GM12878 (cell line): ENCODE measurements at regions of chr1 and their contacts with region 1.

Region 1: GRCh38 chr1:226062558-226063223 is at the start of gene H3-3A:
- DNase-seq: peak; percentile 66
- ATAC-seq: peak; percentile 88
- H3K4me3 ChIP-seq: peak within 1 kb of the TSS; percentile 91
- H3K27ac ChIP-seq: peak within 1 kb of the TSS; percentile 97
- H3K4me1 ChIP-seq: peaks cover 8% of the 10 kb centered on the region
- H3K27me3 ChIP-seq: no peaks in the 10 kb centered on the region
- CTCF ChIP-seq: no peak
- EP300 ChIP-seq: no peak
- POLR2A ChIP-seq: peak; percentile 91
- RAD21 ChIP-seq: no peak
- polyA plus RNA-seq, gene H3-3A: 254 to 435 TPM

Region 2: GRCh38 chr1:225962440-225962975 is 100.2 kb before region 1 on chr1:
- CTCF ChIA-PET with region 1: interaction called, 12 read pairs
- POLR2A ChIA-PET with region 1: no interaction called
- RAD21 ChIA-PET with region 1: interaction called, 3 read pairs
- SMC1A ChIA-PET with region 1: interaction called, 7 read pairs
- in situ Hi-C with region 1: no loop called
- intact Hi-C with region 1: no loop called
- DNase-seq: no peak
- ATAC-seq: peak; percentile 99
- H3K4me3 ChIP-seq: no peak overlapping the region
- H3K27ac ChIP-seq: no peak overlapping the region
- H3K4me1 ChIP-seq: no peaks in the 10 kb centered on the region
- H3K27me3 ChIP-seq: no peaks in the 10 kb centered on the region; a peak in 1 of 4 replicates
- CTCF ChIP-seq: peak; percentile 67 to 85 (median 75)
- EP300 ChIP-seq: no peak
- POLR2A ChIP-seq: no peak
- RAD21 ChIP-seq: peak; percentile 60

Region 3: GRCh38 chr1:225999227-225999911 is 63.3 kb before region 1 on chr1 and contains the start of gene SDE2:
- CTCF ChIA-PET with region 1: interaction called, 86 read pairs
- POLR2A ChIA-PET with region 1: interaction called, 74 read pairs
- RAD21 ChIA-PET with region 1: interaction called, 20 read pairs
- SMC1A ChIA-PET with region 1: interaction called, 35 read pairs
- in situ Hi-C with region 1: no loop called
- intact Hi-C with region 1: loop called (anchors 1 kb)
- DNase-seq: peak; percentile 95
- ATAC-seq: peak; percentile 83
- H3K4me3 ChIP-seq: peak within 1 kb of the TSS; percentile 96
- H3K27ac ChIP-seq: peak within 1 kb of the TSS; percentile 97
- H3K4me1 ChIP-seq: peaks cover 39% of the 10 kb centered on the region
- H3K27me3 ChIP-seq: no peaks in the 10 kb centered on the region
- CTCF ChIP-seq: no peak
- EP300 ChIP-seq: no peak; a peak in 1 of 4 replicates
- POLR2A ChIP-seq: peak; percentile 100
- RAD21 ChIP-seq: no peak
- polyA plus RNA-seq, gene SDE2: 2.7 to 4.3 TPM

Region 4: DNA sequence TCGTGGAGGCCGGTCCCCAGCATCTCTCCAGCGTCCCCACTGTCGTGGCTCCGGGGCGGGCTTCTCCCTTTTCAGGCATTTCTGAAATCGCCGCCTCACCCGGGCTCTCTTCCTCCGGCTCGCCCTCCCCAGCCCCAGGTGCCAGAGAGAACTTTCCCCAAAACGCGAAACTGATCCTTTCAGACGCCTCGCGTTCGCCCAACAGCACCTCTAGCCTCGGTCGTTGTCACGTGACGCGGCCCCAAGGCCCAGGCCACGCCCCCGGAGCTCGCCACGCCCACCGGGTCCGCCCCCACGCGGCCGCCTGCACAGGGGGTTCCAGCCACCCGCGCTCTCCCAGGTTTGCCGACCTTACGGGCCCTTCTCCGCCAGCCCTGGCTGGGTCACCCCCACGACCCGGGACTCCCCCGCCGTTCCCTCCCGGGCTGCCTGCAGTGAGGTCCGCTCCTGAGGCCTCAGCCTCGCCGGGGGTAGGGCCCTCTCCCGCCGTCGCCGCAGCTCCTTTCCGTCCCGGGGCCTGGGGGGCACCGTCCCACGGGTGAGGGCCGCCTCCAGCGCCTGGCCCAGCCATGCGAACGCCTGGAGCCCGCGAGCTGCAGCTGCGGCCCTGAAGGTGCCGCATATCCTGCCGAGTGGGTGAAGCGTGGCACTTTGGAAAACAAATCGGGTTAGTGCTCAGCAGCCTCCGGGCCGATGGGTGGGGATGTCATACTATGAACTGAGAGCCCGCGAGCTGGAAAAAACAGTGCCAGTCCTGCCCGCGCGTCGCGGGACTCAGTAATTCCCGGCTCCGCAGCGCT is 20.8 kb after region 1 on chr1:
- CTCF ChIA-PET with region 1: interaction called, 26 read pairs
- POLR2A ChIA-PET with region 1: interaction called, 8 read pairs
- RAD21 ChIA-PET with region 1: interaction called, 16 read pairs
- SMC1A ChIA-PET with region 1: interaction called, 17 read pairs
- in situ Hi-C with region 1: no loop called
- intact Hi-C with region 1: no loop called
- DNase-seq: peak; percentile 38
- ATAC-seq: peak; percentile 96
- H3K4me3 ChIP-seq: peak overlapping the region; percentile 68
- H3K27ac ChIP-seq: peak overlapping the region; percentile 24; the same call in 1 of the 2 replicates
- H3K4me1 ChIP-seq: peaks cover 6% of the 10 kb centered on the region; the same call in 1 of the 2 replicates
- H3K27me3 ChIP-seq: no peaks in the 10 kb centered on the region
- CTCF ChIP-seq: no peak
- EP300 ChIP-seq: no peak
- POLR2A ChIP-seq: peak; percentile 70
- RAD21 ChIP-seq: no peak

Region 5: GRCh38 chr1:226109829-226110248 is 47.1 kb after region 1 on chr1:
- CTCF ChIA-PET with region 1: interaction called, 96 read pairs
- POLR2A ChIA-PET with region 1: interaction called, 37 read pairs
- RAD21 ChIA-PET with region 1: interaction called, 56 read pairs
- SMC1A ChIA-PET with region 1: interaction called, 39 read pairs
- in situ Hi-C with region 1: no loop called
- intact Hi-C with region 1: loop called (anchors 2 kb)
- DNase-seq: no peak
- ATAC-seq: peak; percentile 71
- H3K4me3 ChIP-seq: peak overlapping the region; percentile 77
- H3K27ac ChIP-seq: peak overlapping the region; percentile 92
- H3K4me1 ChIP-seq: peaks cover 23% of the 10 kb centered on the region
- H3K27me3 ChIP-seq: no peaks in the 10 kb centered on the region
- CTCF ChIP-seq: peak in 2 of 3 experiments; percentile 12 to 20; a peak in 1 of 6 replicates
- EP300 ChIP-seq: no peak
- POLR2A ChIP-seq: 0 out of 2 replicates have a peak, but pooled peaks have one; percentile 13
- RAD21 ChIP-seq: peak; percentile 25; the same call in 1 of the 2 replicates

Region 6: GRCh38 chr1:226407497-226408284 is 345.0 kb after region 1 on chr1 and contains the start of gene PARP1:
- CTCF ChIA-PET with region 1: interaction called, 3 read pairs
- POLR2A ChIA-PET with region 1: interaction called, 3 read pairs
- RAD21 ChIA-PET with region 1: interaction called, 4 read pairs
- SMC1A ChIA-PET with region 1: no interaction called
- in situ Hi-C with region 1: no loop called
- intact Hi-C with region 1: loop called (anchors 5 kb)
- DNase-seq: no peak
- ATAC-seq: peak; percentile 85
- H3K4me3 ChIP-seq: peak within 1 kb of the TSS; percentile 86
- H3K27ac ChIP-seq: peak within 1 kb of the TSS; percentile 77
- H3K4me1 ChIP-seq: peaks cover 22% of the 10 kb centered on the region
- H3K27me3 ChIP-seq: no peaks in the 10 kb centered on the region
- CTCF ChIP-seq: peak; percentile 33 to 83 (median 71); a peak in 5 of 6 replicates
- EP300 ChIP-seq: no peak; a peak in 1 of 4 replicates
- POLR2A ChIP-seq: peak; percentile 86
- RAD21 ChIP-seq: no peak
- polyA plus RNA-seq, gene PARP1: 113 to 170 TPM